Gastrocnemius medialis (tissue), 4 donors: ENCODE measurements at regions of chr17 and their contacts with region 1.

Region 1: GRCh38 chr17:35825206-35825605 is 15.9 kb downstream of the TAF15 start:
- DNase-seq: no peak
- ATAC-seq: no peak
- H3K4me3 ChIP-seq: no peak overlapping the region
- H3K27ac ChIP-seq: no peak overlapping the region
- H3K4me1 ChIP-seq: peaks cover 0 to 3% of the 10 kb centered on the region in 2 donors
- H3K27me3 ChIP-seq: no peaks in the 10 kb centered on the region
- CTCF ChIP-seq: no peak
- POLR2A ChIP-seq: no peak

Region 2: GRCh38 chr17:35322749-35323148 is 502.5 kb before region 1 on chr17:
- in situ Hi-C with region 1: no loop called
- intact Hi-C with region 1: no loop called
- DNase-seq: no peak
- ATAC-seq: no peak
- H3K4me3 ChIP-seq: no peak overlapping the region
- H3K27ac ChIP-seq: no peak overlapping the region
- H3K4me1 ChIP-seq: peaks cover 4 to 8% of the 10 kb centered on the region in 2 donors
- H3K27me3 ChIP-seq: no peaks in the 10 kb centered on the region
- CTCF ChIP-seq: no peak
- POLR2A ChIP-seq: no peak

Region 3: DNA sequence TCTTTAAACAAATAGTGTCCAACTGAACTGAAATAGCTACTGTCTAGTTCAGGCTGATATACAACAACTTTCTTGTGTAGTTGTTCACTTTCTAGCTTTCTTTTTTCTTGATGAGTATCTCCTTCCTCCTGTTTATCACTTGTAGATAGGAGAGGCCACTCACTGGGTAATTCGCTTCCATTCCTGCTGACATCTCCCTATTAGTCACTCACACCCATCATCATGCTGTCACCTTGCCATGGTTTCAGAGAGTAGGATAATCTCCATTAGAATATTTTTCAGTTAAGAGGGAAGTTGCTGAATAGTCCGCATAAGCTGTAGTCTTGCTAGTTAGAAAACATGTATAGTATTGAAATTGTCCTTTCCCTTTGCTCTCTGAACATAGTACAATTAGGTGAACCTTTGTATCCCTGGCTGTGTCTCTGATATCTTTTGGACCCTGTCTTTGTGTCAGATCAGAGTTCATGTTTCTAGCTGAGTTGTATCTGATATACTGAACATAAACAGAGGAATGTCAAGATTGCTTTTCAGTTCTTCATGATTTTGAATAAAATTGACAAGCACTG is 158.2 kb before region 1 on chr17:
- in situ Hi-C with region 1: no loop called
- intact Hi-C with region 1: loop called (anchors 10 kb)
- DNase-seq: no peak
- ATAC-seq: no peak
- H3K4me3 ChIP-seq: no peak overlapping the region
- H3K27ac ChIP-seq: no peak overlapping the region
- H3K4me1 ChIP-seq: no peaks in the 10 kb centered on the region
- H3K27me3 ChIP-seq: no peaks in the 10 kb centered on the region
- CTCF ChIP-seq: no peak
- POLR2A ChIP-seq: no peak

Region 4: GRCh38 chr17:35844547-35844946 is 19.3 kb after region 1 on chr17:
- in situ Hi-C with region 1: no loop called
- intact Hi-C with region 1: loop called (anchors 1 kb)
- DNase-seq: no peak
- ATAC-seq: no peak
- H3K4me3 ChIP-seq: no peak overlapping the region
- H3K27ac ChIP-seq: no peak overlapping the region
- H3K4me1 ChIP-seq: no peaks in the 10 kb centered on the region
- H3K27me3 ChIP-seq: no peaks in the 10 kb centered on the region
- CTCF ChIP-seq: no peak
- POLR2A ChIP-seq: no peak